ENCODE measurements at regions of chr5 and their contacts with region 1.

Region 1: GRCh38 chr5:108642167-108642906 is 105.4 kb upstream of the FER start:
- DNase-seq: peak; percentile 68
- H3K4me3 ChIP-seq: peak overlapping the region; percentile 27 to 52; a peak in 3 of 4 replicates
- H3K27ac ChIP-seq: no peak overlapping the region
- H3K4me1 ChIP-seq: peaks cover 0 to 14% of the 10 kb centered on the region in 2 experiments; a peak in 3 of 4 replicates
- H3K27me3 ChIP-seq: no peaks in the 10 kb centered on the region
- CTCF ChIP-seq: peak; percentile 90
- EP300 ChIP-seq: no peak
- RAD21 ChIP-seq: peak; percentile 92

Region 2: GRCh38 chr5:108503986-108504385 is 138.4 kb before region 1 on chr5:
- CTCF ChIA-PET with region 1: no interaction called
- POLR2A ChIA-PET with region 1: no interaction called
- DNase-seq: no peak
- H3K4me3 ChIP-seq: no peak overlapping the region
- H3K27ac ChIP-seq: no peak overlapping the region
- H3K4me1 ChIP-seq: no peaks in the 10 kb centered on the region
- H3K27me3 ChIP-seq: no peaks in the 10 kb centered on the region
- CTCF ChIP-seq: no peak
- EP300 ChIP-seq: no peak
- RAD21 ChIP-seq: no peak

Region 3: GRCh38 chr5:108661590-108662219 is 19.4 kb after region 1 on chr5:
- CTCF ChIA-PET with region 1: interaction called, 13 read pairs
- POLR2A ChIA-PET with region 1: no interaction called
- DNase-seq: no peak
- H3K4me3 ChIP-seq: no peak overlapping the region
- H3K27ac ChIP-seq: no peak overlapping the region
- H3K4me1 ChIP-seq: no peaks in the 10 kb centered on the region
- H3K27me3 ChIP-seq: no peaks in the 10 kb centered on the region
- CTCF ChIP-seq: no peak
- EP300 ChIP-seq: no peak
- RAD21 ChIP-seq: no peak

Measured in SK-N-SH (cell line).